Common myeloid progenitor, CD34-positive (primary cell): ENCODE measurements at regions of chr19 and their contacts with region 1.

Region 1: GRCh38 chr19:17766543-17767131 is 15.4 kb downstream of the FCHO1 start:
- DNase-seq: peak; percentile 83 to 92 (median 88)
- H3K4me3 ChIP-seq: peak overlapping the region in 1 of 7 experiments; percentile 45
- H3K27ac ChIP-seq: no peak overlapping the region
- H3K4me1 ChIP-seq: peaks cover 0 to 17% (median 16%) of the 10 kb centered on the region in 4 experiments
- H3K27me3 ChIP-seq: no peaks in the 10 kb centered on the region

Region 2: GRCh38 chr19:17605761-17606745 is 160.6 kb before region 1 on chr19:
- CTCF ChIA-PET with region 1: interaction called, 11 read pairs
- POLR2A ChIA-PET with region 1: no interaction called
- DNase-seq: peak; percentile 92 to 96 (median 95)
- H3K4me3 ChIP-seq: peak overlapping the region in 6 of 7 experiments; percentile 26 to 73 (median 58)
- H3K27ac ChIP-seq: no peak overlapping the region
- H3K4me1 ChIP-seq: peaks cover 0 to 23% (median 18%) of the 10 kb centered on the region in 4 experiments
- H3K27me3 ChIP-seq: peaks cover 0 to 8% (median 0%) of the 10 kb centered on the region in 5 experiments

Region 3: DNA sequence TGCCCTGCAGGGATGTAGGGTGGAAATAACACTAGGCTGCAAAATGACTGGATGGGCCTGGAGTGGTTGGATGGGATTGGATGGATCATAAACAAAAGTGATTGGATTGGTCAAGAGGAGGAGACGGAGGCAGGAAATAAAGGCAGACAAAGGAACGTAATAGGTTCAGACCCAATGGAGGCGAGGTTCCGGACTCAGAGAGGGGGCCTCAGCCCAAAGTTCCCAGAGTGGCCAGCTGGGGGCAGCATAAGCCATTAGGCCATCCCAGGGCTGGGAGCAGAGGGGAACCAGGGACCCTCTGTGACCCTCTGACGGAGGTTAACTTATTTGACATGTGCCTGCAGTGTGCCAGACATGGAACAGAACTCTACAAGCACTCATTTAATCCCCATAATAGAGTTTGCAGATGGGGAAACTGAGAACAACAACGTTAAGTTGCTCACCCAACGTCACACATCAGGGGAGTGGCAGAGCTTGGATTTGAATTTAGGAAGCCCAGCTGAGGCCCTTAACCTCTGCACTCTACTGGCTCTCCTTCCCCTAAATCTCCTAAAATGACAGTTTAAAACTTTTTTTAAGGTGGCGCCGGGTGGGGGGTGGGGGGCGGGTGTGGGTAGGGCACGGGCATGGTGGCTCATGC is 62.7 kb before region 1 on chr19:
- CTCF ChIA-PET with region 1: interaction called, 103 read pairs
- POLR2A ChIA-PET with region 1: no interaction called
- DNase-seq: peak; percentile 61 to 84 (median 83)
- H3K4me3 ChIP-seq: no peak overlapping the region
- H3K27ac ChIP-seq: no peak overlapping the region
- H3K4me1 ChIP-seq: peaks cover 0 to 3% (median under 1%) of the 10 kb centered on the region in 4 experiments
- H3K27me3 ChIP-seq: peaks cover 0 to 4% (median 0%) of the 10 kb centered on the region in 5 experiments

Region 4: DNA sequence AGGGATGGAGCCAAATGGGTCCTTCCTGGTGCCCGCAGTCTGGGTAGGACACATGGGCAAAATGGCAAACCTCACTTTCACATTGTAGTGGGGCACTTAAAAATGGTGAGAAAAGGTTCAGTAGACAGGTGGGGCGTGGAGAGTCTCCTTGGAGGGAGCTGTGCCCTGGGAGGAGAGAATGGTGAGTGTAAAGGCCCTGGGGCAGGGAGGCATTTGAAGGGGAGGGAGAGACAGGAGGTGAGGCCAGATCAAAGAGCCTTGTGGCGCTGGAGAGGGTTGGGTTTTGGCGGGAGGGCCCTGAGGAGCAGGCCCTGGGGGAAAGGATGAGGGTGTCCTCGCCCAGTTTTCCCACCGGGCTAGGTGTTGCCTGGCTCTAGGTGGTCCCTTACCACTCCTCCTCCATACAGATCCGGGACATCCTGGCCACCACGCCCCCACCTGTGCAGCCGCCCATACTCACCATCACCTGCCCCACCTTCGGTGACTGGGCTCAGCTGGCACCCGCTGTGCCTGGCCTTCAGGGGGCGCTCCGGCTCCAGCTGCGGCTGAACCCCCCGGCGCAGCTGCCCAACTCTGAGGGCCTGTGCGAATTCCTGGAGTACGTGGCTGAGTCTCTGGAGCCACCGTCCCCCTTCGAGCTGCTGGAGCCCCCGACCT is 41.1 kb before region 1 on chr19:
- CTCF ChIA-PET with region 1: interaction called, 10 read pairs
- POLR2A ChIA-PET with region 1: interaction called, 5 read pairs
- DNase-seq: no peak
- H3K4me3 ChIP-seq: no peak overlapping the region
- H3K27ac ChIP-seq: no peak overlapping the region
- H3K4me1 ChIP-seq: peaks cover 0 to 20% (median 19%) of the 10 kb centered on the region in 4 experiments
- H3K27me3 ChIP-seq: no peaks in the 10 kb centered on the region

Region 5: GRCh38 chr19:17755977-17756670 is 10.5 kb before region 1 on chr19:
- CTCF ChIA-PET with region 1: interaction called, 25 read pairs
- POLR2A ChIA-PET with region 1: interaction called, 6 read pairs
- DNase-seq: peak in 2 of 3 donors; percentile 61 to 62
- H3K4me3 ChIP-seq: no peak overlapping the region
- H3K27ac ChIP-seq: no peak overlapping the region
- H3K4me1 ChIP-seq: peaks cover 0 to 39% (median 32%) of the 10 kb centered on the region in 4 experiments
- H3K27me3 ChIP-seq: no peaks in the 10 kb centered on the region

Region 6: GRCh38 chr19:17784201-17785008 is 17.8 kb after region 1 on chr19:
- CTCF ChIA-PET with region 1: interaction called, 12 read pairs
- POLR2A ChIA-PET with region 1: no interaction called
- DNase-seq: peak; percentile 71 to 84 (median 77)
- H3K4me3 ChIP-seq: no peak overlapping the region
- H3K27ac ChIP-seq: no peak overlapping the region
- H3K4me1 ChIP-seq: peaks cover 0 to 10% (median 9%) of the 10 kb centered on the region in 4 experiments
- H3K27me3 ChIP-seq: no peaks in the 10 kb centered on the region

Region 7: DNA sequence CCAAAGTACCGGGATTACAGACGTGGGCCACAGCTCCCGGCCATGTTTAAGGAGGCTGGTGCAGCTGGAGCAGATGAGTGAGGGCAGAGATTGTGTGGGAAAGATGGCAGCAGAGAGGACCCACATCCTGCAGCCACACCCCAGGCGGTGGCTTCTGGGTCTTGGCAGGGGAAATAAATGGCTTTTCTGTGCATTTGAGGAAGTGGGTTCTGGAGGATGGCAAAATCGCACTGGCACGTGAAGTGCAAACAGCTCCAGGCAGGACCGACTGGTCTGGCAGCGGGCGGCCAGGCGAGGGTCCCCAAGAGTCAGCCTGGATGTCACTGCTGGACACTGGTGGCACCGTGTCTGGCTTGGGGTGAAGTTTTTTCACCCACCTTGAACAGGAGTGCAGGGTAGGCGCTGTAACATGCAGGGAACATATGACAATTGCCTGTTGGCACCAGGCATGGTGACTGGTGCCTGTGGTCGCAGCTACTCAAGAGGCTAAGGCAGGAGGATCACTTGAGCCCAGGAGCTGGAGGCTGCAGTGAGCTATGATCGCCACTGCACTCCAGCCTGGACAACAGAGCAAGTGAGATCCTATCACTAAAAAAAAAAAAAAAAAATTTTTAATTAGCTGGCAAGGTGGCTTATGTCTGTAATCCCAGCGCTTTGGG is 36.8 kb after region 1 on chr19:
- CTCF ChIA-PET with region 1: no interaction called
- POLR2A ChIA-PET with region 1: no interaction called
- DNase-seq: peak; percentile 74 to 93 (median 91)
- H3K4me3 ChIP-seq: peak overlapping the region in 1 of 7 experiments; percentile 45
- H3K27ac ChIP-seq: no peak overlapping the region
- H3K4me1 ChIP-seq: peaks cover 0 to 24% (median 20%) of the 10 kb centered on the region in 4 experiments
- H3K27me3 ChIP-seq: no peaks in the 10 kb centered on the region

Region 8: DNA sequence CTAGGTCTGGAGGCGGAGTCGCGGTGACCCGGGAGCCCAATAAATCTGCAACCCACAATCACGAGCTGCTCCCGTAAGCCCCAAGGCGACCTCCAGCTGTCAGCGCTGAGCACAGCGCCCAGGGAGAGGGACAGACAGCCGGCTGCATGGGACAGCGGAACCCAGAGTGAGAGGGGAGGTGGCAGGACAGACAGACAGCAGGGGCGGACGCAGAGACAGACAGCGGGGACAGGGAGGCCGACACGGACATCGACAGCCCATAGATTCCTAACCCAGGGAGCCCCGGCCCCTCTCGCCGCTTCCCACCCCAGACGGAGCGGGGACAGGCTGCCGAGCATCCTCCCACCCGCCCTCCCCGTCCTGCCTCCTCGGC is 105.2 kb after region 1 on chr19 and contains the start of gene SLC5A5:
- CTCF ChIA-PET with region 1: no interaction called
- POLR2A ChIA-PET with region 1: no interaction called
- DNase-seq: peak in 2 of 3 donors; percentile 52 to 64
- H3K4me3 ChIP-seq: peak within 1 kb of the TSS in 6 of 7 experiments; percentile 26 to 74 (median 59)
- H3K27ac ChIP-seq: no peak within 1 kb of the TSS
- H3K4me1 ChIP-seq: peaks cover 0 to 27% (median 18%) of the 10 kb centered on the region in 4 experiments
- H3K27me3 ChIP-seq: peaks cover 0 to 20% (median 8%) of the 10 kb centered on the region in 5 experiments

Region 9: DNA sequence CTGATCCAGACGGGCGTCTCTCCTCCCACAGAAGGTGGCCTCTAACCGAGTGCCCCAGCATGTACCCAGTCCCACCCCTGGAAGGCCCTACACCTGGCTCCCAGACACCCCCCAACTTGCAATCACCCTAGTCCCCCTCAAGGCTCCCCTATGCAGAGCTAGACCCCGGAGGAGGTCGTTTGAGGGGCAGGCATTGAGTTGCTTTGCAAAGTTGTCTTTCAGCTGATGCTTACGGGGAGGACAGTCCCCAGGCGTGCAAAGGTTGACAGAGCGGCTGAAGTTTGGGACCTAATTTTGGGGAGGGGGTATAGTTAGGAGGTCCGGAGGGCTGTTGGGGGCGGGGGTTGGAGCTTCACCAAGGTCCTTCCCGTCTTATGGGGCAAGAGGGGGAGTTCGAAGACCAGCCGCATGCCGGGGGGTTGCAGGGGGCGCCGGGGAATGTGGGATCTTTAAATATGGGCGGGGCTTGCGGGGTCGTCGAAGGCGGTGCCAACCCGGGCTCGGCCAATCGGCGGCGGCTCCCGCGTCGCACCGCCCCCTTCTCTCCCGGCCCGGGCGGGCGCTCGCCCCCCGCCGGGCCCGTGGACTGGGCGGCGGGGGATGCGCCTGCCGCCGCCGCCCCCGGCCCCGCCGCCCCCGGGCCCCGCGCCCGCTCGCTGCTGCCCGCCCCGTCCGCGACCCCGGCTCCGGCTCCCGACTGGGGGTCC is 200.1 kb after region 1 on chr19 and contains the start of gene KCNN1:
- CTCF ChIA-PET with region 1: no interaction called
- POLR2A ChIA-PET with region 1: no interaction called
- DNase-seq: no peak
- H3K4me3 ChIP-seq: peak within 1 kb of the TSS in 4 of 7 experiments; percentile 12 to 57 (median 38)
- H3K27ac ChIP-seq: no peak within 1 kb of the TSS
- H3K4me1 ChIP-seq: peaks cover 0 to 9% (median 5%) of the 10 kb centered on the region in 4 experiments
- H3K27me3 ChIP-seq: peaks cover 0 to 52% (median 7%) of the 10 kb centered on the region in 5 experiments

Region 10: DNA sequence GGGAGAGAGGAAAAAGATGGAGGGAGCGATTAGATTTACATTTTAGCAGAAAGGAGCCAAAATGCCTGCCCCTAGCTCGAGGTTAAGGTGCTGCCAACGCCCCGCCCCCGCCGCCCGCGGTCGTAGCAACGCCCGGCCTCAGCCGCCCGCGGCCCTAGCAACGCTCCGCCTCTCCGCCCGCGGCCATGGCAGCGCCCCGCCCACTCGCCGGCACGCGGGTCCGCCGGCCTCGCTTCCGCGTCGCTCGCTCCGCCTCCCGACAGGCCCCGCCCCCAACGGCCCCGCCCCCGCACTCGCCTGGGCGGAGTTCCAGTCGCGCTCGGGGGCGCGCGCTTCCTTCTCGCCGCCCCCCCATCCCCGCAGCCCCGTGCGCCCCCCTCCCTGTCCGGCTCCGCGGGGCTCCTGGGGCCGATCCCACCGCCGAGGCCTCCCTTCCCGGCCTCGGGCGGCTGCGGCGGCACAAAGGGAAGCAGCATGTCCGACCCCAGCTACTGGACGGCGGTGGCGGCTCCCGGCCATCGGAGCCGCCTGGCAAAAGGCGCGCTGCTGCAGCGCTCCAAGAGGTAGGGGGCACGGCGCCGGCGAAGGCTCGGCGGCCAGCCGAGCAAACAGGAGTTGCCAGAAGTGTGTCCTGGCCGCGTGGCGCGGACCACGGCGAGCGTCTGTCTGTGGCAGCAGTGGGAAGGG is 351.2 kb after region 1 on chr19:
- CTCF ChIA-PET with region 1: no interaction called
- POLR2A ChIA-PET with region 1: no interaction called
- DNase-seq: peak; percentile 86 to 93 (median 92)
- H3K4me3 ChIP-seq: peak overlapping the region; percentile 20 to 82 (median 73)
- H3K27ac ChIP-seq: peak overlapping the region; percentile 25 to 64
- H3K4me1 ChIP-seq: peaks cover 3 to 45% (median 24%) of the 10 kb centered on the region in 4 experiments
- H3K27me3 ChIP-seq: no peaks in the 10 kb centered on the region